Pancreas (tissue), 10 donors: ENCODE measurements at regions of chr5 and their contacts with region 1.

Region 1: DNA sequence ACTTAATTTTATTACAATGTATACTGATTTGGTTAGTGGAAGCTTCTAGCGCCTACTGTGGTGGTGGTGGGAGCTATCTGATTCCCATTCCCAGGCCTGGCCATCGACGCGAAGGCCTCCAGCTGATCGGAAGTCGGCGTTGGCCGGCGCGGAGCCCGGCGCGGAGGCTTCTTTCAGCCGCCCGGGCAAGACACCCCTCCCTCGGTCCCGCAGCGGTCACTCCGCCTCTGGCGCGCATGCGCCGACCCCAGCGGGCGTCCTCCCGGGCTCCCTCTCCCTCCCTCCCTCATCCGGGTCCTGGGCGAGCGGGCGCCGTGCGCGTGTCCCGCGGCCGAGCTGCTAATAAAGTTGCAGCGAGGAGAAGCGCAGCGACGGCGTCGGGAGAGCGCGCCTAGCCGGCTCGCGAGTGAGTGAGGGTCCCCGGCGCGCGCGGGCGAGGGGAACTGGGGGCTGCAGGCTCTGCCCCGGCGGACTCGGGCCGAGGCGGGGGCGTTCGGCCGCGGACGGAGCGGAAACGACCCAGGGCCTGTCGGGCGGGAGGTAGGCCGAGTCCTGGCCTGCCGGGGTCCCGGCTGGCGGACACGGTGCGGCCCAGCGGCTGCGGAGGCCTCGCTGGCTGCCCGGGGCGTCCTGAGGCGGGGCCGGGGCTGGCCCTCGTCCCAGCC is at the start of gene SMAD5:
- DNase-seq: peak; percentile 95 to 99 (median 97)
- ATAC-seq: peak; percentile 96 to 99 (median 98)
- H3K4me3 ChIP-seq: peak within 1 kb of the TSS; percentile 71 to 90 (median 84)
- H3K27ac ChIP-seq: peak within 1 kb of the TSS; percentile 91 to 98 (median 93)
- H3K4me1 ChIP-seq: peaks cover 11 to 21% (median 19%) of the 10 kb centered on the region in 3 donors
- H3K27me3 ChIP-seq: no peaks in the 10 kb centered on the region
- CTCF ChIP-seq: no peak
- total RNA-seq, gene SMAD5: 18.5 to 46.1 (median 23.4) TPM

Region 2: DNA sequence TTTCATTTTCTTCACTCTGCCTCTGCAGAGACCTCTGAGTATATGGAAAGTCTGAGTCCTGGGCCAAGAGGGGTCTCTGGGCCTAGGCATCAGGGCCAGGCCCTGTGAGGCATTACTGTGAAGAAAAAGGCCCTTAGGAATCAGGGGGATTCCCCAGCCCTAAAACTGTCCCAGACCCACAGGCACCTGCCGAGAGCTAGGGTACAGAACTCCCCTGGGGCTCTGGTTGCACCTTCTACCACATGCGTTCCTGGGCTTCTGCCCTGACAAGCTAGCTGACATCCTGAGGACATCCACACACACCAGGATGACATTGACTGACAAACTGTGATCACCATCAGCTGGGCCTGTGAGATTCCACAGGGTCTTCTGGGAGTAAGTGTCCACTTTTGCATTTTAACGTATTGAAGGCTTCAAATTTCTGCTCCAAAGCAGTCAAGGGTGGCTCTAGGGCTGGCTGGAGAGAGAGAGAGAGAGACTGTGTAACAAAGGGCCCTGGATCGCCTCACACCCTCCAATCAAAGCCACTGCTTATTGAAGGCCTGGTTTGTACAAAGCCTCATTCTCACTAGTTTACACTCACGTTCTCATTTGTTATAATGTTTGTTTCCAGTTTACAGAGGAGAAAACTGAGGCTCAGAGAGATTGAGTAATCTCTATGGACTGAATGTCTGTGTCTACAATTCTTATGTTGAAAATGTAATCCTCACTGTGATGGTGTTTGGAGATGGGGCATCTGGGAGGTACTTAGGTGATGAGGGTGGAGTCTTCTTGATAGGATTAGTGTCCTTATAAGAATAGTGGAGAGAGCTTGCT is 58.8 kb before region 1 on chr5:
- intact Hi-C with region 1: loop called in 1 of 3 experiments (anchors 10 kb)
- DNase-seq: no peak
- ATAC-seq: no peak
- H3K4me3 ChIP-seq: no peak overlapping the region
- H3K27ac ChIP-seq: no peak overlapping the region
- H3K4me1 ChIP-seq: no peaks in the 10 kb centered on the region
- H3K27me3 ChIP-seq: no peaks in the 10 kb centered on the region
- CTCF ChIP-seq: no peak

Region 3: GRCh38 chr5:136087961-136088871 is 44.5 kb before region 1 on chr5:
- intact Hi-C with region 1: no loop called
- DNase-seq: peak; percentile 60 to 87 (median 82)
- ATAC-seq: peak; percentile 92 to 95 (median 93)
- H3K4me3 ChIP-seq: no peak overlapping the region
- H3K27ac ChIP-seq: peak overlapping the region in 2 of 4 donors; percentile 48 to 67
- H3K4me1 ChIP-seq: peaks cover 4 to 10% (median 6%) of the 10 kb centered on the region in 3 donors
- H3K27me3 ChIP-seq: no peaks in the 10 kb centered on the region
- CTCF ChIP-seq: no peak